Activated CD8-positive, alpha-beta T cell treated with anti-CD3 and anti-CD28 coated beads, Interleukin-2, amount 10 ng/mL, durations not matched to agents 7 days and 5 days (primary cell): ENCODE measurements at regions of chr9 and their contacts with region 1.

Region 1: GRCh38 chr9:91949946-91950664 is at the start of gene ROR2:
- DNase-seq: peak; percentile 69
- ATAC-seq: peak; percentile 93
- H3K4me3 Mint-ChIP-seq: peak within 1 kb of the TSS; percentile 72
- H3K27ac Mint-ChIP-seq: no peak within 1 kb of the TSS
- H3K4me1 Mint-ChIP-seq: peaks cover 7% of the 10 kb centered on the region
- H3K27me3 Mint-ChIP-seq: peaks cover 62% of the 10 kb centered on the region
- total RNA-seq, gene ROR2: 0.05 TPM

Region 2: GRCh38 chr9:91775011-91775707 is 174.9 kb before region 1 on chr9:
- CTCF ChIA-PET with region 1: interaction called, 12 read pairs
- POLR2A ChIA-PET with region 1: no interaction called
- DNase-seq: peak; percentile 79
- ATAC-seq: peak; percentile 83
- H3K4me3 Mint-ChIP-seq: no peak overlapping the region
- H3K27ac Mint-ChIP-seq: no peak overlapping the region
- H3K4me1 Mint-ChIP-seq: no peaks in the 10 kb centered on the region
- H3K27me3 Mint-ChIP-seq: peaks cover 14% of the 10 kb centered on the region

Region 3: GRCh38 chr9:91963711-91964240 is 13.7 kb after region 1 on chr9:
- CTCF ChIA-PET with region 1: interaction called, 18 read pairs
- POLR2A ChIA-PET with region 1: no interaction called
- DNase-seq: no peak
- ATAC-seq: no peak
- H3K4me3 Mint-ChIP-seq: no peak overlapping the region
- H3K27ac Mint-ChIP-seq: no peak overlapping the region
- H3K4me1 Mint-ChIP-seq: no peaks in the 10 kb centered on the region
- H3K27me3 Mint-ChIP-seq: peaks cover 18% of the 10 kb centered on the region